ENCODE measurements at regions of chr10 and their contacts with region 1.

Region 1: DNA sequence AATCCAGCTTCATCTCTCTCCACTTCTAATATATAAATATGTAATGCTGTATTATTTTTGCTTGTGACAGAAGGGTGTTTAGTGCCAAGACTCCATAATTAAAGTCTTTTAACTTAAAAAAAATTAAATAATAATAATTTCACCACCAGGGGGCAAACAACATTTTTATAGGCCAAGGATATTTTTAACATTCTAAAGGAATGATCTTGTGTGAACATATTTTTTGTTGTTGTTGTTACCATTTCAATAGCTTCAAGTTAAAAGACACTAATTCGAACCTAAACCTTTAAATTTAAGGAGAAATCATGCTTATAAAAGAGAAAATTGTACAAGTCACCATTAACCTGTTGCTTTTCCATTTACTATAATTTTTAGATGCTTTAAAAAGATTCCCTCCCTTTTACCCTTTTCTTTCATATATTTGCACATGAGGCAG is 7.5 kb upstream of the DNAJC1 start:
- DNase-seq: no peak
- H3K4me3 Mint-ChIP-seq: no peak overlapping the region
- H3K27ac Mint-ChIP-seq: no peak overlapping the region
- H3K4me1 Mint-ChIP-seq: no peaks in the 10 kb centered on the region
- H3K27me3 Mint-ChIP-seq: peaks cover 13% of the 10 kb centered on the region
- CTCF ChIP-seq: peak; percentile 28

Region 2: DNA sequence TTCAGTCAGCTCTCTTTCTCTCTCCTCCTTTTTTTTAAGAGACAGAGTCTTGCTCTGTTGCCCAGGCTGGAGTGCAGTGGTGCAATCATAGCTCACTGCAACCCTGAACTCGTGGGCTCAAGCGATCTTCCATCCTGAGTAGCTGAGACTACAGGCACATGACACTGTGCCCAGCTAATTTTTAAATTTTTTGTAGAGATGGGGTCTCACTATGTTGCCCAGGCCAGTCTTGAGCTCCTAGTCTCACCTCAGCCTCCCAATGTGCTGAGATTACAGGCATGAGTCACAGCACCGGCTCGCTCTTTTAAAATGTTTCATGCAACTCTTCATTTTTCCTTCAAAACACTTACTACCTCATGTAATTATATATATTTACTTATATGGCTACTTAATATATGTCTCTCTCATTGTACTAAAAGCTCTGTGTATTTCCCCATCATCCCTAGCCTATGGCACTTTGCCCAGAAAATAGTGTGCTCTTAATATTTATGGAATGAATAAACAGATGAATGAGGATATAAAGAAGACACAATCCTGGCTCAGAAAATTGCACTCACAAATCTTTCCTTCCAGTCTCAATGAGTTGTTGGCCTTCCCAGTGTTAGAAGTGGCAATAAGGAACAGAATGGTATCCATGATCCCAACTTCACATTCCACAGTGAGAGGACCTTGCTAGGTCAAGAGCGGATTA is 172.9 kb after region 1 on chr10:
- CTCF ChIA-PET with region 1: no interaction called
- intact Hi-C with region 1: no loop called
- DNase-seq: no peak
- H3K4me3 Mint-ChIP-seq: no peak overlapping the region
- H3K27ac Mint-ChIP-seq: no peak overlapping the region
- H3K4me1 Mint-ChIP-seq: no peaks in the 10 kb centered on the region
- H3K27me3 Mint-ChIP-seq: peaks cover 56% of the 10 kb centered on the region
- CTCF ChIP-seq: no peak

Region 3: GRCh38 chr10:22420787-22421517 is 410.0 kb after region 1 on chr10:
- CTCF ChIA-PET with region 1: no interaction called
- intact Hi-C with region 1: loop called (anchors 1 kb)
- DNase-seq: no peak
- H3K4me3 Mint-ChIP-seq: no peak overlapping the region
- H3K27ac Mint-ChIP-seq: no peak overlapping the region
- H3K4me1 Mint-ChIP-seq: no peaks in the 10 kb centered on the region
- H3K27me3 Mint-ChIP-seq: no peaks in the 10 kb centered on the region
- CTCF ChIP-seq: no peak

Region 4: GRCh38 chr10:22666287-22667092 is 655.5 kb after region 1 on chr10:
- CTCF ChIA-PET with region 1: no interaction called
- intact Hi-C with region 1: no loop called
- DNase-seq: no peak
- H3K4me3 Mint-ChIP-seq: peak overlapping the region; percentile 29
- H3K27ac Mint-ChIP-seq: no peak overlapping the region
- H3K4me1 Mint-ChIP-seq: peaks cover 11% of the 10 kb centered on the region
- H3K27me3 Mint-ChIP-seq: no peaks in the 10 kb centered on the region
- CTCF ChIP-seq: no peak